WTC11 (cell line): ENCODE measurements at regions of chr2 and their contacts with region 1.

Region 1: DNA sequence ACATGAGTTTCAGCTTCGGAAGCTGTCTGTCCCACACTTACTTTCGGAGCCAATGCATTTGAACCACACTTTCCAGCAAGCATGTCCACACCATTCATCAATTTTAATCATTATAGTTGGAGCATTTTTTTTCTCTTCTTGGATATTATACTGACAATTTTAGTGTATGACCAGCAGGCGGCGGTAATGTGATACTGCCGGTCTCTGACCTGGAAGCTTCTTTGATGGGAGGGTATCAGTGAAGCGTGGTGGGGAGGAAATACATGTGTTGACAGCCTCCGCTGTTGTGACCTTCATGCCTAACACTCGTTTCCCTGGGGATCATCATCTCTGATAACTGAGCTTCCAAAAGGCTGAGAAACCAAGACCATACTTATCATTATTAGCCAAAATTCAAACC is 231.7 kb downstream of the GBX2 start:
- DNase-seq: peak; percentile 56
- ATAC-seq: peak; percentile 64
- H3K4me3 Mint-ChIP-seq: no peak overlapping the region
- H3K27ac Mint-ChIP-seq: 0 out of 2 replicates have a peak overlapping the region, but pooled peaks have one; percentile 62
- H3K4me1 Mint-ChIP-seq: peaks cover 26% of the 10 kb centered on the region
- H3K27me3 Mint-ChIP-seq: no peaks in the 10 kb centered on the region
- CTCF ChIP-seq: peak; percentile 71

Region 2: GRCh38 chr2:235779444-235779896 is 157.0 kb before region 1 on chr2:
- CTCF ChIA-PET with region 1: interaction called, 23 read pairs
- POLR2A ChIA-PET with region 1: no interaction called
- DNase-seq: peak; percentile 92
- ATAC-seq: peak; percentile 98
- H3K4me3 Mint-ChIP-seq: no peak overlapping the region
- H3K27ac Mint-ChIP-seq: peak overlapping the region; percentile 24; the same call in 1 of the 2 replicates
- H3K4me1 Mint-ChIP-seq: peaks cover 13% of the 10 kb centered on the region
- H3K27me3 Mint-ChIP-seq: no peaks in the 10 kb centered on the region
- CTCF ChIP-seq: peak; percentile 53; the same call in 1 of the 2 replicates

Region 3: DNA sequence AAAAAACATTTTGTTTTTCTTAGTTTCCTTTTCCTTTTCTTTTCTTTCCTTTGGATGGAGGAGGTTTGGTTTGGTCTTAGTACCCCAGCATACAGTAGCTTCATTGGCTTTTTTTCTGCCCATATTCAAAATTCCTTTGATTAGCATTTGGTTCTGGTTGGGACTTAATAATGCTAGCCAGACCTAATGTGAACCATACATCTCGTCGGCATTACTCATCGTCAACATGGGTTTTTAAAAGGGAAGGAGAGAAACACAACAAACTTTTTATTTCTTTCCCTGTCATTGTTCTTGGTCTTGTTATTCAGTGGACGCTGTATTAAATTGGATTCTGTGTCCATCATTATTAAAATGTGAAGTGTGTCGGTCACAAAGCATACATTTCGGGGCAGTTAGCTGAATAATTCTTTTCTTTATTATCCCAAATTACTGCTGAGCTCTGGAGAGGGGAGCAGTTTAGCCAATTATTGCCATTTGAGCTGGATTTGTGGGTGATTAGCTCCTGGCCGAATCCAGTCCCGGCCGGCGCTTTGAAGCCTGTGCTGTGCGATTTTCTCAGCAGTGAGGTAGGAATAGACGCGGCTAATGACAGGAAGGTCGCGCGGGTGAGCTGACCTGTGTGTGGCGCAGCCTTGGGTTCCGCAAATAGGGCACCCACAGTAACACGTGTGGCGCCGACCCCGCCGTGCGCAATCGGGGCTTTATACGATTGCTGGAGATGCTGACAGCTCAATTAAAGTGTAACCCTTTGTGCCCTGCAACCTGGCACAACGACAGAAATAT is 71.6 kb before region 1 on chr2:
- CTCF ChIA-PET with region 1: no interaction called
- POLR2A ChIA-PET with region 1: no interaction called
- DNase-seq: peak; percentile 20
- ATAC-seq: no peak
- H3K4me3 Mint-ChIP-seq: peak overlapping the region; percentile 17; the same call in 1 of the 2 replicates
- H3K27ac Mint-ChIP-seq: peak overlapping the region; percentile 47; the same call in 1 of the 2 replicates
- H3K4me1 Mint-ChIP-seq: peaks cover 44% of the 10 kb centered on the region
- H3K27me3 Mint-ChIP-seq: no peaks in the 10 kb centered on the region
- CTCF ChIP-seq: no peak

Region 4: GRCh38 chr2:235903782-235904584 is 32.5 kb before region 1 on chr2:
- CTCF ChIA-PET with region 1: interaction called, 12 read pairs
- POLR2A ChIA-PET with region 1: no interaction called
- DNase-seq: no peak
- ATAC-seq: peak; percentile 75
- H3K4me3 Mint-ChIP-seq: no peak overlapping the region
- H3K27ac Mint-ChIP-seq: peak overlapping the region; percentile 51; the same call in 1 of the 2 replicates
- H3K4me1 Mint-ChIP-seq: peaks cover 18% of the 10 kb centered on the region
- H3K27me3 Mint-ChIP-seq: peaks cover 21% of the 10 kb centered on the region
- CTCF ChIP-seq: no peak

Region 5: GRCh38 chr2:235921508-235922191 is 14.8 kb before region 1 on chr2:
- CTCF ChIA-PET with region 1: interaction called, 15 read pairs
- POLR2A ChIA-PET with region 1: no interaction called
- DNase-seq: no peak
- ATAC-seq: no peak
- H3K4me3 Mint-ChIP-seq: no peak overlapping the region
- H3K27ac Mint-ChIP-seq: no peak overlapping the region
- H3K4me1 Mint-ChIP-seq: peaks cover 14% of the 10 kb centered on the region
- H3K27me3 Mint-ChIP-seq: no peaks in the 10 kb centered on the region
- CTCF ChIP-seq: no peak

Region 6: GRCh38 chr2:235951982-235952381 is 15.5 kb after region 1 on chr2:
- CTCF ChIA-PET with region 1: interaction called, 12 read pairs
- POLR2A ChIA-PET with region 1: no interaction called
- DNase-seq: no peak
- ATAC-seq: no peak
- H3K4me3 Mint-ChIP-seq: no peak overlapping the region
- H3K27ac Mint-ChIP-seq: no peak overlapping the region
- H3K4me1 Mint-ChIP-seq: peaks cover 40% of the 10 kb centered on the region
- H3K27me3 Mint-ChIP-seq: no peaks in the 10 kb centered on the region
- CTCF ChIP-seq: no peak

Region 7: GRCh38 chr2:236168110-236169067 is 231.9 kb after region 1 on chr2 and contains the start of gene GBX2:
- CTCF ChIA-PET with region 1: interaction called, 11 read pairs
- POLR2A ChIA-PET with region 1: no interaction called
- DNase-seq: peak; percentile 90
- ATAC-seq: peak; percentile 35
- H3K4me3 Mint-ChIP-seq: peak within 1 kb of the TSS; percentile 71
- H3K27ac Mint-ChIP-seq: no peak within 1 kb of the TSS
- H3K4me1 Mint-ChIP-seq: peaks cover 57% of the 10 kb centered on the region
- H3K27me3 Mint-ChIP-seq: peaks cover 86% of the 10 kb centered on the region
- CTCF ChIP-seq: no peak
- total RNA-seq, gene GBX2: 15.3 to 25.6 TPM (median 19.1 TPM) in 3 replicates